PC-3 (cell line): ENCODE measurements at regions of chr11 and their contacts with region 1.

Region 1: DNA sequence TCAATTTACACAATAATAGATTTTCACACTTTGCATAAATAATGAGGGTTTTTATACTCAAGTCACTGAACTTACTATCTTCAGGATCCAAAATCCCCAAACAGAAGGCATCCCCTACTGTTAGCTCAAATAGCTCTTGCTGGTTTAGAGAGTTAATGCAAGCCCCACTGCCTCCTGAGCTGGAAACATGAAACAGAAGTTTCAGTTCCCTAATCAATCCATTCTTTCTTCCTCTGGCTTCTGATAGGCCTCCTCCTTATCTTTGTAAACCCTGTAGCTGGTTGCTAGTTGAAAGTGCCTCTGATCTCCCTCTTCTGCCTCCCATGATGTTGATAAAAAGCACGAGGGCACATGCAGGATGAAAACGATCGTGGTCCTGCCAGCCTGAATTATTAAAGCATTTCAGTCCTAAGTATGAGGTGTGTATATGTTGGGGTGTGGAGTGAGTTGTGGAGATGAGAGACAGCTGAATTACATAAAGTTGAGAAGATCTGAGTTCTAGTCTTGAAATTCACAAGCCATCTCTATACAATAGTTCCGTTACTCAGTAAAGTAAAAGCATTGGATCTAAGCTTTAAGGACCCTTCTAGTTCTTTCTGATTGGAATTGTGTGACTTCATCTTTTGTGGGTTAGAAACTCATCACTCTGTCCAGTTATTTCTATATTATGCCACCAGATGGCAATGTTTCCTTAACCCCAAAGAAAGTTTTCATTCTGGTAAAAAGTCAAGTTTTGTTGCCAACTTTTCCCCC is 35.0 kb upstream of the EHF start:
- DNase-seq: peak; percentile 84
- ATAC-seq: peak; percentile 64
- H3K4me3 ChIP-seq: peak overlapping the region; percentile 19; the same call in 1 of the 2 replicates
- H3K27ac ChIP-seq: peak overlapping the region; percentile 60
- H3K4me1 ChIP-seq: peaks cover 25% of the 10 kb centered on the region
- H3K27me3 ChIP-seq: no peaks in the 10 kb centered on the region
- CTCF ChIP-seq: peak; percentile 83

Region 2: GRCh38 chr11:34366522-34366921 is 219.4 kb before region 1 on chr11:
- CTCF ChIA-PET with region 1: no interaction called
- POLR2A ChIA-PET with region 1: no interaction called
- intact Hi-C with region 1: no loop called
- DNase-seq: peak; percentile 70
- ATAC-seq: no peak
- H3K4me3 ChIP-seq: no peak overlapping the region
- H3K27ac ChIP-seq: no peak overlapping the region
- H3K4me1 ChIP-seq: peaks cover 10% of the 10 kb centered on the region
- H3K27me3 ChIP-seq: no peaks in the 10 kb centered on the region
- CTCF ChIP-seq: peak; percentile 87

Region 3: GRCh38 chr11:34512840-34513681 is 72.8 kb before region 1 on chr11:
- CTCF ChIA-PET with region 1: no interaction called
- POLR2A ChIA-PET with region 1: no interaction called
- intact Hi-C with region 1: loop called (anchors 5 kb)
- DNase-seq: peak; percentile 70
- ATAC-seq: peak; percentile 99
- H3K4me3 ChIP-seq: no peak overlapping the region
- H3K27ac ChIP-seq: no peak overlapping the region
- H3K4me1 ChIP-seq: 0 out of 2 replicates have a peak, but pooled peaks cover 7% of the 10 kb centered on the region
- H3K27me3 ChIP-seq: no peaks in the 10 kb centered on the region
- CTCF ChIP-seq: peak; percentile 89

Region 4: GRCh38 chr11:34599406-34599901 is 13.5 kb after region 1 on chr11:
- CTCF ChIA-PET with region 1: interaction called, 15 read pairs
- POLR2A ChIA-PET with region 1: no interaction called
- intact Hi-C with region 1: no loop called
- DNase-seq: peak; percentile 93
- ATAC-seq: peak; percentile 87
- H3K4me3 ChIP-seq: no peak overlapping the region
- H3K27ac ChIP-seq: peak overlapping the region; percentile 92
- H3K4me1 ChIP-seq: peaks cover 32% of the 10 kb centered on the region
- H3K27me3 ChIP-seq: no peaks in the 10 kb centered on the region
- CTCF ChIP-seq: no peak

Region 5: DNA sequence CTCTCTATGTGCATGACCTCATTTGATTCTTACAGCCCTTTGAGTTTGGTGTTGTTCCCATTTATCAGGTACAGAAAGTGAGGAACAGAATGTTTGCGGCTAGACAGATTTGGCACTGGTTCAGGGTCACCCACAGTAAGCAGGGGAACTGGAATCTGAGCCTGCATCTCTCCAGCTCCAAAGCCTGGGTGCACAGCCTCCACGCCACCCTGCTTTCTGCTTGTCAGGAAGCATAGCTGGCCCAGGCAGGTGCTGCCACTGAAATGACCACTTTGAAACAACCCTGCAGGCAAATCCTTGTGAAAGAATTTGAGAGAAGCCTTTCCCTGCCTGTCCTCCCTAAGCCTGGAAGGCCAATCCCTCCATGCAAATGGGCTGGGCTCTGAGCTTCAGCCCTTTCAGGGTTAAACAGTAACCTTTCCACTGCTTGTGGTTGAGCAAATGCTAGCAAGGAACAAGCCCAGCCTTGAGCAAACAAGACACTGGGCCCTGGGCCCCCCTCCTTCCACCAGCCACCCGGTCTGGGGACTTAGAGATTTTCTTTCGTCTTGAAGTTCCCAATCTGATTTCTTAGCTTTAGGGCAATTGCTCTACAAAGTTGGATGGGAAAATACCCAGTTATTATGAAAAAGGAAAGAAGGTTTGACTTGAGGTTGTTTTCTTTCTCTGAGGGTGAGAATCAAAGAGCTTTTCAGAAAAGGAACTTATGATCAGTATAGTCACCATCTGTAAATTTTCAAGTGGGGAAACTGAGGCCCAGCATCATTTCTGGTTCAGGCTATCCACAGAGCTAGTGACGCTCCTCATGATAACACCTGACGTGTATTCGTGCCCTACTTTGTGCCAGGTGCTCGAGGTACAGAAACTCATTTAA is 54.4 kb after region 1 on chr11:
- CTCF ChIA-PET with region 1: no interaction called
- POLR2A ChIA-PET with region 1: interaction called, 3 read pairs
- intact Hi-C with region 1: loop called (anchors 2 kb)
- DNase-seq: peak; percentile 95
- ATAC-seq: peak; percentile 85
- H3K4me3 ChIP-seq: peak overlapping the region; percentile 20; the same call in 1 of the 2 replicates
- H3K27ac ChIP-seq: peak overlapping the region; percentile 97
- H3K4me1 ChIP-seq: peaks cover 70% of the 10 kb centered on the region
- H3K27me3 ChIP-seq: no peaks in the 10 kb centered on the region
- CTCF ChIP-seq: no peak